ENCODE measurements at regions of chrX and their contacts with region 1.

Region 1: DNA sequence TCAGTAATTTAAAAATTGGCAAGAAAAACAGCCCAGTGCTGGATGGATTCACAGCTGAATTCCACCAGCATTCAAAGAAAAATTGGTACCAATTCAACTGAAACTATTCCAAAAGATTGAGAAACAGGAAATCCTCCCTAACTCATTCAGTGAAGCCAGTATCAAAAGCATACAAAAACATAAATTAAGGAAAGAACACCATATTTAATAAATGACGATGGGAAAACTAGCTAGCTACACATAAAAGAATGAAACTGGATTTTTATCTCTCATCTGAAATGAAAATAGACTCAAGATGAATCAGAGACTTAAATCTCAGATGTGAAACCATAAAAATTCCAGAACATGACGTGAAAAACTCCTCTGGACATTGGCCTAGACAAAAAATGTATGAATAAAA is 516.8 kb upstream of the SPANXN1 start:
- DNase-seq: no peak
- H3K4me3 ChIP-seq: no peak overlapping the region
- H3K27ac ChIP-seq: no peak overlapping the region
- H3K4me1 ChIP-seq: no peaks in the 10 kb centered on the region
- H3K27me3 ChIP-seq: no peaks in the 10 kb centered on the region
- CTCF ChIP-seq: no peak

Region 2: GRCh38 chrX:144531877-144532276 is 198.6 kb before region 1 on chrX:
- CTCF ChIA-PET with region 1: interaction called, 12 read pairs
- POLR2A ChIA-PET with region 1: no interaction called
- intact Hi-C with region 1: no loop called
- DNase-seq: no peak
- H3K4me3 ChIP-seq: no peak overlapping the region
- H3K27ac ChIP-seq: no peak overlapping the region
- H3K4me1 ChIP-seq: no peaks in the 10 kb centered on the region
- H3K27me3 ChIP-seq: no peaks in the 10 kb centered on the region
- CTCF ChIP-seq: no peak

Region 3: GRCh38 chrX:144627947-144628346 is 102.5 kb before region 1 on chrX:
- CTCF ChIA-PET with region 1: no interaction called
- POLR2A ChIA-PET with region 1: no interaction called
- intact Hi-C with region 1: loop called (anchors 1 kb)
- DNase-seq: peak in 1 of 2 experiments; percentile 56
- H3K4me3 ChIP-seq: no peak overlapping the region
- H3K27ac ChIP-seq: no peak overlapping the region
- H3K4me1 ChIP-seq: no peaks in the 10 kb centered on the region
- H3K27me3 ChIP-seq: no peaks in the 10 kb centered on the region
- CTCF ChIP-seq: no peak

Region 4: GRCh38 chrX:144648788-144649187 is 81.7 kb before region 1 on chrX:
- CTCF ChIA-PET with region 1: no interaction called
- POLR2A ChIA-PET with region 1: no interaction called
- intact Hi-C with region 1: no loop called
- DNase-seq: no peak
- H3K4me3 ChIP-seq: no peak overlapping the region
- H3K27ac ChIP-seq: no peak overlapping the region
- H3K4me1 ChIP-seq: no peaks in the 10 kb centered on the region
- H3K27me3 ChIP-seq: no peaks in the 10 kb centered on the region
- CTCF ChIP-seq: no peak

Region 5: DNA sequence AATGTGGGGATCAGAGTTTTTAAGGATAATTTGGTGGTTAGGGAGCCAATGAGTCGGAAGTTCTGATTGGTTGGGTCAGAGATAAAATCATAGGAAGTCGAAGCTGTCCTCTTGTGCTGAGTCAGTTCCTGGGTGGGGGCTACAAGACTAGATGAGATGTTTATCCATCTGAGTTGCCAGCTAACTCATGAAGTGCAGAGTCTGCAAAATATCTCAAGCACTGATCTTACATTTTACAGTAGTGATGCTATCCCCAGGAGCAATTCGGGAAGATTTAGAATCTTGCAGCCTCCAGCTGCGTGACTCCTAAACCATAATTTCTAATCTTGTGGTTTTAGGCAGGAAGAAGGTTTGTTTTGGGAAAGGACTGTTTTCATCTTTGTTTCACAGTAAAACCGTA is 49.0 kb before region 1 on chrX:
- CTCF ChIA-PET with region 1: no interaction called
- POLR2A ChIA-PET with region 1: no interaction called
- intact Hi-C with region 1: no loop called
- DNase-seq: no peak
- H3K4me3 ChIP-seq: no peak overlapping the region
- H3K27ac ChIP-seq: no peak overlapping the region
- H3K4me1 ChIP-seq: no peaks in the 10 kb centered on the region
- H3K27me3 ChIP-seq: no peaks in the 10 kb centered on the region
- CTCF ChIP-seq: no peak

Region 6: DNA sequence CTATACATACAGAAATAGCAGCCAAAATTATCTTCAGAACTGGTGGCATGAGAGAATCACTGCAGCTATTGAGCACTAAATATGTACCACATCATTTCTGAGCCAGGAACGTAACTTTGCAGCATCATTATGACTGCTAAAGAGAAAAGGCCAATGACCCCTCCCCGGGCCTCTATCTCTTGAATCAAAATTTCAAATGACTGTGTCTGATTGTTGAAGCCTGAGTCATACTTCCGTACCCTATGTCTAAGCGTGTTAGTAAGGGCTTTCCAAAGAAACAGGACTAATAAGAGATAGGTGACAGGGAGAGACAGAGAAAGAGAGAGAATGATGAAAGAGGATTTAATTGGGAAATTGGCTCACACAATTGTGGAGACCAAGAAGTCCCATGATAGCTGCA is 71.3 kb after region 1 on chrX:
- CTCF ChIA-PET with region 1: no interaction called
- POLR2A ChIA-PET with region 1: no interaction called
- intact Hi-C with region 1: loop called (anchors 1 kb)
- DNase-seq: peak; percentile 64 to 67
- H3K4me3 ChIP-seq: no peak overlapping the region
- H3K27ac ChIP-seq: peak overlapping the region; percentile 87
- H3K4me1 ChIP-seq: peaks cover 8% of the 10 kb centered on the region
- H3K27me3 ChIP-seq: no peaks in the 10 kb centered on the region
- CTCF ChIP-seq: no peak

Region 7: GRCh38 chrX:145041486-145041885 is 311.0 kb after region 1 on chrX:
- CTCF ChIA-PET with region 1: no interaction called
- POLR2A ChIA-PET with region 1: no interaction called
- intact Hi-C with region 1: no loop called
- DNase-seq: no peak
- H3K4me3 ChIP-seq: no peak overlapping the region
- H3K27ac ChIP-seq: no peak overlapping the region
- H3K4me1 ChIP-seq: no peaks in the 10 kb centered on the region
- H3K27me3 ChIP-seq: no peaks in the 10 kb centered on the region
- CTCF ChIP-seq: no peak

Region 8: GRCh38 chrX:145190801-145191389 is 460.4 kb after region 1 on chrX:
- CTCF ChIA-PET with region 1: no interaction called
- POLR2A ChIA-PET with region 1: no interaction called
- intact Hi-C with region 1: no loop called
- DNase-seq: no peak
- H3K4me3 ChIP-seq: no peak overlapping the region
- H3K27ac ChIP-seq: no peak overlapping the region
- H3K4me1 ChIP-seq: no peaks in the 10 kb centered on the region
- H3K27me3 ChIP-seq: no peaks in the 10 kb centered on the region
- CTCF ChIP-seq: peak; percentile 74

Measured in PC-9 (cell line).